ENCODE measurements at regions of chr4 and their contacts with region 1.

Region 1: GRCh38 chr4:182955411-182955810 is 38.2 kb upstream of the DCTD start:
- DNase-seq: no peak
- ATAC-seq: no peak
- H3K4me3 ChIP-seq: no peak overlapping the region
- H3K27ac ChIP-seq: no peak overlapping the region
- H3K4me1 ChIP-seq: no peaks in the 10 kb centered on the region
- H3K27me3 ChIP-seq: no peaks in the 10 kb centered on the region
- CTCF ChIP-seq: no peak

Region 2: GRCh38 chr4:183059797-183060196 is 104.4 kb after region 1 on chr4:
- intact Hi-C with region 1: loop called in 1 of 3 experiments (anchors 10 kb)
- DNase-seq: no peak
- ATAC-seq: no peak
- H3K4me3 ChIP-seq: no peak overlapping the region
- H3K27ac ChIP-seq: no peak overlapping the region
- H3K4me1 ChIP-seq: no peaks in the 10 kb centered on the region
- H3K27me3 ChIP-seq: no peaks in the 10 kb centered on the region
- CTCF ChIP-seq: no peak